ENCODE measurements at regions of chr16 and their contacts with region 1.

Region 1: DNA sequence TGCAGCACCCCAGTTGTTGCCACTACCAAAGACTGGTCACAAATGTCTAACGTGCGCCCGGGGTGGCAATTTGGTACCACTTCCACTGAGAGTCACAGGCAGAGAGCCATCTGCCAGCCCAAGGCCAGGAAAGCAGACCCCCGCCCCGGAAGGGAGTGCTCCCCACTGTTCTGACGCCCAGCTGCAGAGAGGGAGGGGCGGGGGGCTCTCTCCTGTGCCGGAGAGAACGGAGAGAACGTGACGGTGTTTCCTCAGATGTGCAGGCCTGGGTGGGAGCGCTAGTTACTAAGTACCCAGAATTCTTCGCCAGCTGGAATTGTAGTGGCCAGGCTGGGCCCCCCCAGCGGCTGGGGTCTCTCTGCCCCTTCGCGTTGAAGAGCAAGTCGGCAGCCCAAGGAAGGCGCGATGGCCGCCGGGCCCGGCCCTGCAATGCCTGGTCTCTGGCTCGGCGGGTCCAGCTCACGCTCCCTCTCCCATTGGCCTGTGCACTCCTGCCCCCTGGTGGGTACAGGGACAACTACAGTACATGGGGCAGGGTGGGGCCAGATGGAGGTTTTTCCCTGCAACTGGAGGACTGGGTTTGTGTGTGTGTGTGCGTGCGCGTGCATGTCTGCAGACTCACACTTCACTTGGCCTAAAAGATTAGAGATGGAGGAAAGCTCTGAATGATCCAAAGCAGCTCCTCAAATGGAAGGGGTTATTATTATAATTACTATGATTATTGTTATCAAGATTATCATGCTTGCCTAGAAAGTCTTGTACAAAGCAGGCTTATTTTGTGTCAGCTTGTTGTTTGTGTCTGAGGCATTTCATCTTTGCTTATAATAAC is 107.1 kb downstream of the AMFR start:
- DNase-seq: peak; percentile 86 to 93 (median 90)
- H3K4me3 ChIP-seq: peak overlapping the region in 55 of 59 donors; percentile 6 to 59 (median 43)
- H3K27ac ChIP-seq: peak overlapping the region; percentile 82 to 100 (median 96)
- H3K27me3 ChIP-seq: no peaks in the 10 kb centered on the region
- CTCF ChIP-seq: peak; percentile 88 to 99 (median 97)

Region 2: GRCh38 chr16:55944377-55944802 is 373.8 kb before region 1 on chr16:
- intact Hi-C with region 1: loop called (anchors 2 to 5 kb)
- DNase-seq: peak; percentile 57 to 87 (median 78)
- H3K4me3 ChIP-seq: no peak overlapping the region
- H3K27ac ChIP-seq: peak overlapping the region in 56 of 59 donors; percentile 24 to 94 (median 81)
- H3K27me3 ChIP-seq: no peaks in the 10 kb centered on the region
- CTCF ChIP-seq: peak; percentile 91 to 99 (median 98)

Region 3: GRCh38 chr16:55955845-55956244 is 362.4 kb before region 1 on chr16:
- intact Hi-C with region 1: no loop called
- DNase-seq: peak in 8 of 10 donors; percentile 31 to 70 (median 56)
- H3K4me3 ChIP-seq: no peak overlapping the region
- H3K27ac ChIP-seq: peak overlapping the region in 38 of 59 donors; percentile 3 to 80 (median 44)
- H3K27me3 ChIP-seq: no peaks in the 10 kb centered on the region
- CTCF ChIP-seq: no peak

Region 4: DNA sequence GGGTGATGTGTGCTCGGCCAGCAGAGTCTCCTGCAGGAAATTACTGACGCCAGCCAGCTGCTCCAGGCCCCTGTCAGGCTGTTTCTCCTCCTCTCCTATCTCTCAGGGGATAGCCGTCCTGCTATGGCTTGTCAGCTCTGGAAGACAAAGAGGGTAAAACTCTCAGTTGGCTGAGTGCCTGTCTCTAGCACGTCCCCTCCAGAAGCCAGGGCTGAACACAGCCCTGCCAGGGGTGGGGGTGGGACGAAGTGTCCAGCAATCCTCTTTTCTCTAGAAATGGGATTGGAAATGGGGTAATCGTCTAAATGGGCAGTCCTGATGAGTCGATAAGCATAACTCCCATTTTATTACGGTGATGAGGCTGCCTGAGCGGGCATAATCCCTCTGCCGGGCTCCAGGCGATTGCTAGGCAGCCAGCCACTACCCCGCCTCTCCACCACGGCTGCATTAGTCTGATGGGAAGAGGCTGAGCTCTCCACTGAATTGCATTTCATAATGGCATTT is 216.0 kb before region 1 on chr16:
- intact Hi-C with region 1: loop called (anchors 5 to 10 kb)
- DNase-seq: peak in 5 of 10 donors; percentile 16 to 53 (median 33)
- H3K4me3 ChIP-seq: peak overlapping the region in 58 of 59 donors; percentile 24 to 67 (median 43)
- H3K27ac ChIP-seq: peak overlapping the region in 54 of 59 donors; percentile 5 to 87 (median 72)
- H3K27me3 ChIP-seq: no peaks in the 10 kb centered on the region
- CTCF ChIP-seq: no peak

Region 5: GRCh38 chr16:56191156-56191815 is 126.9 kb before region 1 on chr16 and contains the start of gene GNAO1:
- intact Hi-C with region 1: loop called (anchors 1 to 5 kb)
- DNase-seq: peak; percentile 50 to 89 (median 75)
- H3K4me3 ChIP-seq: peak within 1 kb of the TSS; percentile 63 to 97 (median 82)
- H3K27ac ChIP-seq: peak within 1 kb of the TSS; percentile 92 to 99 (median 98)
- H3K27me3 ChIP-seq: no peaks in the 10 kb centered on the region
- CTCF ChIP-seq: peak in 10 of 56 donors; percentile 8 to 23 (median 12)
- total RNA-seq, gene GNAO1: 319 to 543 (median 428) TPM

Region 6: DNA sequence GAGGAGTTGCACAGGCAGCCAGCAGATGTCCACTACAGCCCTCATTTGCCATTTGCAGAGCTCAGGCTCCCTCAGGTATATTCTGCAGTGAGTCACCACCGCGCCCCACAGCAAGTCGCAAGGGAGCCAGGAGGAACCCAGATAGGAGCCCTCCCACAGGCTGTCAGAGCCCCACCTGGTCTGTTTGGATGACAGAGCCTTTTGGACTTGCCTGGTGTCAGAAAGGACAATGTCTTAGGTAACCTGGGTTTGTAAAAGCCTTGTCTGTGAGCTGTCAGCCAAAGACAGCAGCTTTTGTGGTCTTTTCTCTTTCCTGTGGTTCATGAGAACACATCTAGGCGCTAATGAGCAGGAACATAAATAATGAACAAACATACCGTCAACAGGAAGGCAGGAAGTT is 56.1 kb before region 1 on chr16:
- intact Hi-C with region 1: loop called in 1 of 2 experiments (anchors 2 kb)
- DNase-seq: no peak
- H3K4me3 ChIP-seq: no peak overlapping the region
- H3K27ac ChIP-seq: peak overlapping the region; percentile 80 to 100 (median 97)
- H3K27me3 ChIP-seq: no peaks in the 10 kb centered on the region
- CTCF ChIP-seq: no peak

Region 7: GRCh38 chr16:56348158-56349085 is 30.2 kb after region 1 on chr16:
- intact Hi-C with region 1: no loop called
- DNase-seq: peak in 3 of 10 donors; percentile 26 to 39 (median 36)
- H3K4me3 ChIP-seq: no peak overlapping the region
- H3K27ac ChIP-seq: peak overlapping the region in 56 of 59 donors; percentile 0 to 78 (median 60)
- H3K27me3 ChIP-seq: no peaks in the 10 kb centered on the region
- CTCF ChIP-seq: no peak